Spleen (tissue), 13 donors: ENCODE measurements at regions of chrX and their contacts with region 1.

Region 1: DNA sequence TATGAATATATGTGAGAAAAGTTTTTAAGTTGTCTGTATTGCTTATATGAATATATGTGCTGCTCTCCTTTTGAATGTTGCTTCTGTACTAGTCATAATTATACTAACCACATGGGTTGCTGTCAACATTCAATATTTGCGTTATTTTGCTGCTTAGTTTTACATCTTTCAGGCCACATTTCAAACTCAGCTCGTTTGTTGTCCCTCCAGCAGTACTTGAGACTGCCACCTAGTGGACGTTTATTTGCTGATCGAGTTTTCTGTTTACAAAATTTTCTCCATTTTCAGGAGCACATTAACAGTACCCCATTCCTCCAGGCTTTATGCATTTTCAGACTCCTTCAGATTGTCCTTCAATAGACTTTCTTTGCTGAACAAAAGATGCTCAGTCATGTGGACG is 75.8 kb downstream of the NUDT11 start:
- DNase-seq: no peak
- H3K4me3 ChIP-seq: no peak overlapping the region
- H3K27ac ChIP-seq: no peak overlapping the region
- H3K4me1 ChIP-seq: no peaks in the 10 kb centered on the region
- H3K27me3 ChIP-seq: no peaks in the 10 kb centered on the region
- CTCF ChIP-seq: peak in 10 of 11 experiments; percentile 34 to 69 (median 46)
- POLR2A ChIP-seq: no peak

Region 2: DNA sequence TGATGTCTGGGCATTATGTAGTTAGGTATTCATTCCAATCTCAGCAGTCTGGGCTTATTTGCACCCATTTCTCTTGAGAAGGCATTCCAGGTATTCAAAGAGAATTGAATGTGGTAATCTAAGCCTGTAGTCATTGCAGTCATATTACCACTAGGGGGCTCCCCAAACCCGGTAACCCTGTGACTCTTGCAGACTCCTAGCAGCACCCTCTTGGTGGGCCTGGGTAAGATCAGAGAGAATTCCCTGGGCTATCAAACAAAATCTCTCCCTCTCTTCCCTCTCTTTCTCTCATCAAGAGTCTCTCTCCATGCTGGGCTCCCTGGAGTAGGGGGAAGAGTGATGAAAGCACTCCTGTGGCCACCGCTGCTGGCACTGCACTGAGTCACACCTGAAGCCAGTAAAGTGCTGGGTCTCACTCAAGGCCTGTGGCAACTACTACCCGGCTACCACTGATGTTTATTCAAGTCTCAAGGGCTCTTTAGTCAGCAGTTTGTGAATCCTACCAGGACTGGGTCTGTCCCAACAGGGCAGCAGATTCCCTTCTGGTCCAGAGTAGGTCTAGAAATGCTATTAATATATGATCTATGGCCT is 275.7 kb before region 1 on chrX:
- intact Hi-C with region 1: loop called (anchors 10 kb)
- DNase-seq: no peak
- H3K4me3 ChIP-seq: no peak overlapping the region
- H3K27ac ChIP-seq: no peak overlapping the region
- H3K4me1 ChIP-seq: no peaks in the 10 kb centered on the region
- H3K27me3 ChIP-seq: peaks cover 0 to 22% (median 0%) of the 10 kb centered on the region in 7 donors
- CTCF ChIP-seq: peak in 9 of 11 experiments; percentile 22 to 64 (median 50)
- POLR2A ChIP-seq: no peak

Region 3: GRCh38 chrX:51192104-51192503 is 228.5 kb before region 1 on chrX:
- intact Hi-C with region 1: no loop called
- DNase-seq: no peak
- H3K4me3 ChIP-seq: no peak overlapping the region
- H3K27ac ChIP-seq: no peak overlapping the region
- H3K4me1 ChIP-seq: no peaks in the 10 kb centered on the region
- H3K27me3 ChIP-seq: no peaks in the 10 kb centered on the region
- CTCF ChIP-seq: no peak
- POLR2A ChIP-seq: no peak

Region 4: GRCh38 chrX:51336584-51336983 is 84.0 kb before region 1 on chrX:
- intact Hi-C with region 1: loop called (anchors 2 kb)
- DNase-seq: no peak
- H3K4me3 ChIP-seq: no peak overlapping the region
- H3K27ac ChIP-seq: no peak overlapping the region
- H3K4me1 ChIP-seq: no peaks in the 10 kb centered on the region
- H3K27me3 ChIP-seq: peaks cover 0 to 11% (median 0%) of the 10 kb centered on the region in 7 donors
- CTCF ChIP-seq: peak in 9 of 11 experiments; percentile 6 to 57 (median 54)
- POLR2A ChIP-seq: no peak